MCF 10A (cell line): ENCODE measurements at regions of chr15 and their contacts with region 1.

Region 1: DNA sequence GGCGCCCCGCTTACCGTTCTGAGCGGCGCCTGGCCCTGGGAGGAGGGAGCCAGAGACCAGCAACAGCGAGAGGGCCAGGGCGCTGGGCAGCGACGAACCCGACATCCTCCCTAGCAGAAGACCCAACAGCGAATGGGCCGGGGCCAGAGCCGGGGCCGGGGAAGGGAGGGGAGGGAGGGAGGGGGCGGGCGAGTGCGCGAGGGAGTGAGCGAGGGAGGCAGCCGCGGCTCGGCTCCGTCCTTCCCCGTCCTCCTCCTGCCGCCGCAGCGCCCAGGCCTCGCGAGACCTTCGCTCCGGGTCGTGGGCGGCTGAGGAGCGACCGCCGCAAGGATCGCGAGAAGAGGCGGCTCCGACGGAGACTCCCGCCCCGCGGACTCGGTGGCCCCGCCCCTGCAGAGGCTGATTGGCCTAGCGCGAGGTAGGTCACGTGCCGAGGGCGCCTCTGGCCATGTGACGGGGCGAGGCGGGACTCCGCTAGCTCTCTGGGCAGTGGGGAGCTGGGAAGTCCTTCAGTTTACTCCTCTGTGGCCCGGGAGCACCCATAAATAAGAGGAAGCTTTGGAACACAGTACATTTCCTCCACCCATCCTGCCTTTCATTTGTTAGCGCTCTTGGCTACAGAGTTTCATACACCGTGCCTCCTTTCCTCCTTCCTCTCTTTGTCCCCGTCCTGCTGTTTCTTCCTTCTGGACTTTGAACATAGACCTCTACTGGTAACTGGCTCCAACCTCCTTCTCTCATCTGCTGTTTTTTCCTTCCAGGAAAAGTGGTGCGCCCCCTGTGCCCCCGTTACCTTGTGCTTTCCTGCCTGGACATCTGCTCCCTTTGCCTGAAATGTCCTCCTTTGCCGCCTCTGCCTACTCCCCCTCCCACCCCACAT is at the start of gene NPTN:
- DNase-seq: peak; percentile 97
- H3K4me3 Mint-ChIP-seq: peak within 1 kb of the TSS; percentile 80
- H3K27ac Mint-ChIP-seq: peak within 1 kb of the TSS; percentile 97
- H3K4me1 Mint-ChIP-seq: peaks cover 57% of the 10 kb centered on the region
- H3K27me3 Mint-ChIP-seq: no peaks in the 10 kb centered on the region
- CTCF ChIP-seq: no peak
- total RNA-seq, gene NPTN: 71.0 and 78.9 TPM in 2 replicates

Region 2: DNA sequence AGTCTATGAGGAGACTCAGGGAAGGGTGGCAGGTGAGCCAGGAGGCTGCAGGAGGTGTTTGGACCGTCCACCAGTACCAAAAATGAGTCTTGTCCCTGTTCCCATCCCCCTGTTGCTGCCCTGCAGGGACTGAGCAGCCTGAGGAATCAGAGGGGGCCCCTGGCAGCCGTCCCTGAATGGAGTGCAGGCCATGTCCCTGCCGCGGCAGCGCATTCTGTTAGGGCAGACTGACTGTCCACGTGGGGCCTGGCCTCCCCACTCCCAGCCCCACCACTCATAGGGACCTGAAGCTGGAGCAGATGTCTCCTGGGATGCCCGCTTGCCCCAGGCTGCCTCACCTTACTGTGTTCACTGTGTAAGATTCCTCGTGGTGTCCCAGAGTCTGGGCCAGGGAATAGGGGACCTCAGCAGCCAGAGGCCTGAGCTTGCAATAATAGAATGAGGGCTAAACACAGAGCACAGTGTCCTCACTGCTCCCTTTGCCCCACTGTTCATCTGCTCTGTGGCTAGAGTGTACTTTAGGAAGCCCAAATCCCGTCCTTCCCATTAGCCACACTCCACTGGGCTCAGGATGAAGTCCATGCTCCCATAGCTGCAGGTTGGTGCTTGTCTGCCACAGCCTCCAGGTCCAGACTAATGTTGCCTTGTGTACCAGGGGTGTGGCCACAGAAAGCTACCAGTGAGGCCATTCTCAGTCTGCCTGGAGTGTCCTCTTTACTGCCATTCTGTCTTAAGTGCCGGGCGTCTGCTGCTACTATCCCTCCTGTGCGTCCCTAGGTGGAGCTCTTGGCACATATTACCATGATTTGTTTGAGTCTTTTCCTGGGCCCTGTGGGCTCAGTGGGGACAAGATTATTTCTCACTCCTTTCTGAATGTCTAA is 327.8 kb before region 1 on chr15:
- CTCF ChIA-PET with region 1: interaction called, 23 read pairs
- POLR2A ChIA-PET with region 1: interaction called, 4 read pairs
- intact Hi-C with region 1: loop called (anchors 1 kb)
- DNase-seq: peak; percentile 75
- H3K4me3 Mint-ChIP-seq: no peak overlapping the region
- H3K27ac Mint-ChIP-seq: no peak overlapping the region
- H3K4me1 Mint-ChIP-seq: no peaks in the 10 kb centered on the region
- H3K27me3 Mint-ChIP-seq: no peaks in the 10 kb centered on the region
- CTCF ChIP-seq: peak; percentile 66

Region 3: GRCh38 chr15:73504885-73505284 is 128.5 kb before region 1 on chr15:
- CTCF ChIA-PET with region 1: no interaction called
- POLR2A ChIA-PET with region 1: no interaction called
- intact Hi-C with region 1: no loop called
- DNase-seq: no peak
- H3K4me3 Mint-ChIP-seq: no peak overlapping the region
- H3K27ac Mint-ChIP-seq: no peak overlapping the region
- H3K4me1 Mint-ChIP-seq: no peaks in the 10 kb centered on the region
- H3K27me3 Mint-ChIP-seq: peaks cover 31% of the 10 kb centered on the region
- CTCF ChIP-seq: no peak

Region 4: DNA sequence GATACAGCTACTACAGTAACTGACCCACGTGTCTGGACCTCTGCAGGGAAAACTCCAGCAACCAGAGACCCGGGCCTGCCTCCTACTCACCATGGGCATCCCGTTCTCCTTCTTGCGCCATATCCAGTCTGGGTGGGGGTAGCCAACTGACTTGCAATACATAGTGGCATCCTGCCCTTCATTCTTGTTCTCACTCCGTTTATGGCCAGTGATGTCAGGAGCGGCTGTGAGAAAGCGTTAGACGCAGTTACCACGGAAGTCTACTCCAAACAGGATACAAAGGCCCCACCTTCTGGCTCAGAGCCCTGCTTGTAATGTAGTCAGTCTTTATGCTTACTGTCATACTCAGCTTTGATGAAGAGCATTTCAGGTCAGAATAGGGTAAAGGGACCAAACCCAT is 59.8 kb before region 1 on chr15:
- CTCF ChIA-PET with region 1: interaction called, 7 read pairs
- POLR2A ChIA-PET with region 1: interaction called, 51 read pairs
- intact Hi-C with region 1: no loop called
- DNase-seq: peak; percentile 97
- H3K4me3 Mint-ChIP-seq: no peak overlapping the region
- H3K27ac Mint-ChIP-seq: peak overlapping the region; percentile 88
- H3K4me1 Mint-ChIP-seq: peaks cover 39% of the 10 kb centered on the region
- H3K27me3 Mint-ChIP-seq: no peaks in the 10 kb centered on the region
- CTCF ChIP-seq: no peak

Region 5: DNA sequence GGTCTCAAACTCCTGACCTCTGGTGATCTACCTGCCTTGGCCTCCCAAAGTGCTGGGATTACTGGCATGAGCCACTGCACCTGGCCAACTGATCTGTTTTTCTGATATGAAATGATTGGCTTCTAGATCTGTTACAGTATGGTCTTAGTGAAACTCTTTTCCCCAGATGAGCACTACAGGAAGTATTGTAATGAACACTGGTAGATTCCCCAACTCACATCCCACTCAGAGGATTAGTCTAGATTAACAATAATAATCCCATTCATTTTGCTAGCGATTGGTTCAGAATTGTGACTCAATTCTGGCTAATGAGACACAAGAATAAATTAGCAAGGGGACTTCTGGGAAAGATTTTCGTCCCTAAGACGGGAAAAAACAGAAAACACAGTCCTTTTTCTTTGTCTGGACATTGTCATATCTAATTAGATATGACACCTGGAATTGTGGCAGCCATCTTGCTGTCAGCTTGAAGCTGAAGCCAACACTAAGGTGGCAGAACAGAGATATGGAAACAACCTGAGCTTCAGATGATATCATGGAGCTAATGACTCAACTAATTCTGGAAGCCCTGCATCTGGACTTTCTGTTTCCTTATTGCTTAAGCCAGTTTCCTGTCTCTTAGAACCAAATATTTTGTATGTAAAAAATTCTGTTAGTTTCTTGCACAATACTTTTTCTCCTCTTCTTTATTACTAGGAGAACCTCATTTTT is 17.2 kb after region 1 on chr15:
- CTCF ChIA-PET with region 1: interaction called, 32 read pairs
- POLR2A ChIA-PET with region 1: interaction called, 13 read pairs
- intact Hi-C with region 1: no loop called
- DNase-seq: peak; percentile 66
- H3K4me3 Mint-ChIP-seq: no peak overlapping the region
- H3K27ac Mint-ChIP-seq: peak overlapping the region; percentile 44
- H3K4me1 Mint-ChIP-seq: peaks cover 32% of the 10 kb centered on the region
- H3K27me3 Mint-ChIP-seq: no peaks in the 10 kb centered on the region
- CTCF ChIP-seq: no peak

Region 6: DNA sequence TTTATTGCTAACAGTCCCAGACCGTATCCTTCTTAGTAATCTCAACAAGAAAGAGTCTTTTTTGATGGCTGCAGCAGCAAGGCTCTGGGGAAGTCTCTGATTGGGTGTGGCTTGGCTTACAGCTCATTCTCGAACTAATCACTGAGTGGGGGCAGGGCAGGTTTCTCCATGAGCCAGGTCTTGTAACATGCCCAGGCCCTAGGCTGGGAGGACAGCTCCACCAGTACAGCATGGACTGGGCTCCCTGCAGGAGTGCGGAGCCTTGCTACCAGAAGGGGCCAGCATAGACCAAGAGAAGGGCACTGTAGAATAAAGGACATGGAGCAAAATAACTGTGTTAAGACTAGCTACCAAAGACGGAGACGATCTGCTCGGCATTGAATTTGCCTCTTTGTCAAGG is 58.0 kb after region 1 on chr15:
- CTCF ChIA-PET with region 1: interaction called, 308 read pairs
- POLR2A ChIA-PET with region 1: interaction called, 91 read pairs
- intact Hi-C with region 1: no loop called
- DNase-seq: peak; percentile 66
- H3K4me3 Mint-ChIP-seq: no peak overlapping the region
- H3K27ac Mint-ChIP-seq: no peak overlapping the region
- H3K4me1 Mint-ChIP-seq: peaks cover 55% of the 10 kb centered on the region
- H3K27me3 Mint-ChIP-seq: no peaks in the 10 kb centered on the region
- CTCF ChIP-seq: no peak

Region 7: GRCh38 chr15:73781038-73781925 is 147.9 kb after region 1 on chr15:
- CTCF ChIA-PET with region 1: interaction called, 8 read pairs
- POLR2A ChIA-PET with region 1: no interaction called
- intact Hi-C with region 1: loop called (anchors 1 kb)
- DNase-seq: peak; percentile 55
- H3K4me3 Mint-ChIP-seq: no peak overlapping the region
- H3K27ac Mint-ChIP-seq: no peak overlapping the region
- H3K4me1 Mint-ChIP-seq: no peaks in the 10 kb centered on the region
- H3K27me3 Mint-ChIP-seq: no peaks in the 10 kb centered on the region
- CTCF ChIP-seq: peak; percentile 38